Activated CD8-positive, alpha-beta T cell treated with anti-CD3 and anti-CD28 coated beads, Interleukin-2, amount 10 ng/mL, durations not matched to agents 7 days and 5 days (primary cell): ENCODE measurements at regions of chr5 and their contacts with region 1.

Region 1: GRCh38 chr5:149852641-149853330 is 91.8 kb downstream of the PDE6A start:
- DNase-seq: peak; percentile 59
- ATAC-seq: peak; percentile 73
- H3K4me3 Mint-ChIP-seq: no peak overlapping the region
- H3K27ac Mint-ChIP-seq: no peak overlapping the region
- H3K4me1 Mint-ChIP-seq: no peaks in the 10 kb centered on the region
- H3K27me3 Mint-ChIP-seq: no peaks in the 10 kb centered on the region

Region 2: GRCh38 chr5:149381987-149382340 is 470.8 kb before region 1 on chr5:
- CTCF ChIA-PET with region 1: no interaction called
- POLR2A ChIA-PET with region 1: no interaction called
- DNase-seq: peak; percentile 78
- ATAC-seq: peak; percentile 85
- H3K4me3 Mint-ChIP-seq: no peak overlapping the region
- H3K27ac Mint-ChIP-seq: no peak overlapping the region
- H3K4me1 Mint-ChIP-seq: no peaks in the 10 kb centered on the region
- H3K27me3 Mint-ChIP-seq: peaks cover 2% of the 10 kb centered on the region

Region 3: GRCh38 chr5:149636851-149637246 is 215.9 kb before region 1 on chr5:
- CTCF ChIA-PET with region 1: interaction called, 12 read pairs
- POLR2A ChIA-PET with region 1: no interaction called
- DNase-seq: peak; percentile 65
- ATAC-seq: peak; percentile 72
- H3K4me3 Mint-ChIP-seq: no peak overlapping the region
- H3K27ac Mint-ChIP-seq: no peak overlapping the region
- H3K4me1 Mint-ChIP-seq: peaks cover 7% of the 10 kb centered on the region
- H3K27me3 Mint-ChIP-seq: no peaks in the 10 kb centered on the region

Region 4: GRCh38 chr5:149834246-149834855 is 18.4 kb before region 1 on chr5:
- CTCF ChIA-PET with region 1: interaction called, 163 read pairs
- POLR2A ChIA-PET with region 1: no interaction called
- DNase-seq: peak; percentile 73
- ATAC-seq: peak; percentile 48
- H3K4me3 Mint-ChIP-seq: no peak overlapping the region
- H3K27ac Mint-ChIP-seq: no peak overlapping the region
- H3K4me1 Mint-ChIP-seq: peaks cover 5% of the 10 kb centered on the region
- H3K27me3 Mint-ChIP-seq: no peaks in the 10 kb centered on the region

Region 5: GRCh38 chr5:150258130-150258529 is 405.3 kb after region 1 on chr5:
- CTCF ChIA-PET with region 1: no interaction called
- POLR2A ChIA-PET with region 1: no interaction called
- DNase-seq: no peak
- ATAC-seq: peak; percentile 47
- H3K4me3 Mint-ChIP-seq: no peak overlapping the region
- H3K27ac Mint-ChIP-seq: no peak overlapping the region
- H3K4me1 Mint-ChIP-seq: no peaks in the 10 kb centered on the region
- H3K27me3 Mint-ChIP-seq: peaks cover 2% of the 10 kb centered on the region

Region 6: DNA sequence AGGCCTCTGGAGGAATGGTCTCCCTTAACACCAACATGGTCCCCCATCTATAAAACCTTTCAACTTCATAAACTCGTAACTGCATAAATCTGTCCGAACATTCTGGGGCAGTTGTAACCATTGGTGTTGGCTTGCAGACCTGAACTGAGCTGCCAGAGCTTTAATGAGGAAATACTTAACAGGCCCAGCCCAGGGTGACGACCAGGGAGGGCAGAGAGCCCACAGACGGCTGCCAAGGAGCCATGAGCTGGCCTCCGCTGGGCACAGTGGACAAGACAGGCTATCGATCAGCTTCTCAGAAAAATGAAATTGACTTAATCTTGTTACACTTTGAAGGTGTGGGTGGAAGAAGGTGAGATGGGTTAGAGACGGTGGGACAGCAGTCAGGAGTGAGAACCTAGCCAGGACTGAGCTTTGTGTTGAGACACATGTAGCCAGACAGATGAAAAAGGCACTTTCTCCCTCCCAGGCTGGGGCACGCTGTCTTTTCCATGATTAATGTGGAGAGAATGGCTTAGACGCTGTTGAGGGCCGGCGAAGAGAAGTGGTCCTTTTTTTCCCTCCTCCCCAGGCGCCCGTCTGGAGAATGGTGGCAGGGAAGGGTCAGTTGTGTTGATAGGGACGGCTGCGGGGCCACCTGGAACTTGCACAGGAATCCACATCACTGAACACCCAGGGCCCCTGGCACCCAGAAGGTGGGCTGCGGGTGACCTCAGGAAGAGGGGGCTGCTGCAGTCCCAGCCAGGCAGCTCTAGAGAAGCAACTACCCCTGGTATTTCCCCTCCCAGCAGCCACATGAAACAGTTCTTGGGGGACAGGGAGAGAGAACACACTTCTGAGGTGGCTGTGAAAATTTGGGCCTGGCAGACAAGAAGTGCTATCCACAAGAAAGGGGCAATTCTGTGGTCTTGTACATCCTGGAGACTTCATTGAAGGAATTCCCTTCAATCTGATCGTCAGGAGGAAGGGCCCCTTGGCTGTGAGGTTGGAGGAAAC is 477.4 kb after region 1 on chr5:
- CTCF ChIA-PET with region 1: no interaction called
- POLR2A ChIA-PET with region 1: no interaction called
- DNase-seq: no peak
- ATAC-seq: no peak
- H3K4me3 Mint-ChIP-seq: no peak overlapping the region
- H3K27ac Mint-ChIP-seq: no peak overlapping the region
- H3K4me1 Mint-ChIP-seq: peaks cover 4% of the 10 kb centered on the region
- H3K27me3 Mint-ChIP-seq: peaks cover 20% of the 10 kb centered on the region